Activated CD8-positive, alpha-beta T cell treated with anti-CD3 and anti-CD28 coated beads for 36 hours (primary cell): ENCODE measurements at regions of chr19 and their contacts with region 1.

Region 1: DNA sequence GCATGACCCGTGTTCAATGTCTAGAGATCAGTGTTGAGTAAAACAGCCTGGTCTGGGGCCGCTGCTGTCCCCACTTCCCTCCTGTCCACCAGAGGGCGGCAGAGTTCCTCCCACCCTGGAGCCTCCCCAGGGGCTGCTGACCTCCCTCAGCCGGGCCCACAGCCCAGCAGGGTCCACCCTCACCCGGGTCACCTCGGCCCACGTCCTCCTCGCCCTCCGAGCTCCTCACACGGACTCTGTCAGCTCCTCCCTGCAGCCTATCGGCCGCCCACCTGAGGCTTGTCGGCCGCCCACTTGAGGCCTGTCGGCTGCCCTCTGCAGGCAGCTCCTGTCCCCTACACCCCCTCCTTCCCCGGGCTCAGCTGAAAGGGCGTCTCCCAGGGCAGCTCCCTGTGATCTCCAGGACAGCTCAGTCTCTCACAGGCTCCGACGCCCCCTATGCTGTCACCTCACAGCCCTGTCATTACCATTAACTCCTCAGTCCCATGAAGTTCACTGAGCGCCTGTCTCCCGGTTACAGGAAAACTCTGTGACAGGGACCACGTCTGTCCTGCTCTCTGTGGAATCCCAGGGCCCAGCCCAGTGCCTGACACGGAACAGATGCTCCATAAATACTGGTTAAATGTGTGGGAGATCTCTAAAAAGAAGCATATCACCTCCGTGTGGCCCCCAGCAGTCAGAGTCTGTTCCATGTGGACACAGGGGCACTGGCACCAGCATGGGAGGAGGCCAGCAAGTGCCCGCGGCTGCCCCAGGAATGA is 1.5 kb upstream of the CEACAM5 start:
- DNase-seq: peak; percentile 80
- ATAC-seq: peak; percentile 97
- H3K4me3 Mint-ChIP-seq: peak overlapping the region; percentile 39
- H3K27ac Mint-ChIP-seq: no peak overlapping the region
- H3K4me1 Mint-ChIP-seq: no peaks in the 10 kb centered on the region
- H3K27me3 Mint-ChIP-seq: peaks cover 38% of the 10 kb centered on the region
- CTCF ChIP-seq: peak; percentile 100

Region 2: GRCh38 chr19:41641879-41642485 is 64.9 kb before region 1 on chr19:
- CTCF ChIA-PET with region 1: interaction called, 27 read pairs
- POLR2A ChIA-PET with region 1: no interaction called
- intact Hi-C with region 1: no loop called
- DNase-seq: peak; percentile 80
- ATAC-seq: peak; percentile 88
- H3K4me3 Mint-ChIP-seq: no peak overlapping the region
- H3K27ac Mint-ChIP-seq: no peak overlapping the region
- H3K4me1 Mint-ChIP-seq: no peaks in the 10 kb centered on the region
- H3K27me3 Mint-ChIP-seq: peaks cover 10% of the 10 kb centered on the region
- CTCF ChIP-seq: peak; percentile 94

Region 3: DNA sequence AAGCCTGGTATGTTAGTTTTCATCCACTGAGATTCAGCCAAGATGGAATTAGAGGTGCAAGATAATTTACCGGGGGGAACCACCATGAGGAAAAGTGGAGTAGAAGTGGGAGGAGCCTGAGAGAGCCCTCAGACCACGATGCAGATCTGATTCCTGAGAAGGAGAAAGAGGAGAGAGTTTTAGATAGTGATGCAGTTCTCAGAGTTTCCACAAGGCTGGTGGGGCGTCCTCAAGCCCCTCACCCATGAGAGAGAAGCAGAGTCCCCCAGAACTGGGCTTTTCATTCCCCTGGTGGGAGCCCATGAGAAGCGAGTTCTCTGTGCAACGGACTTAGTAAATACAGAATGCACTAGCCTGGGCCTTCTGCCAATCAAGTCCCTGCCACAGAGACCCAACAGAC is 19.6 kb after region 1 on chr19:
- CTCF ChIA-PET with region 1: interaction called, 17 read pairs
- POLR2A ChIA-PET with region 1: interaction called, 3 read pairs
- intact Hi-C with region 1: no loop called
- DNase-seq: no peak
- ATAC-seq: no peak
- H3K4me3 Mint-ChIP-seq: no peak overlapping the region
- H3K27ac Mint-ChIP-seq: no peak overlapping the region
- H3K4me1 Mint-ChIP-seq: no peaks in the 10 kb centered on the region
- H3K27me3 Mint-ChIP-seq: peaks cover 37% of the 10 kb centered on the region
- CTCF ChIP-seq: no peak

Region 4: DNA sequence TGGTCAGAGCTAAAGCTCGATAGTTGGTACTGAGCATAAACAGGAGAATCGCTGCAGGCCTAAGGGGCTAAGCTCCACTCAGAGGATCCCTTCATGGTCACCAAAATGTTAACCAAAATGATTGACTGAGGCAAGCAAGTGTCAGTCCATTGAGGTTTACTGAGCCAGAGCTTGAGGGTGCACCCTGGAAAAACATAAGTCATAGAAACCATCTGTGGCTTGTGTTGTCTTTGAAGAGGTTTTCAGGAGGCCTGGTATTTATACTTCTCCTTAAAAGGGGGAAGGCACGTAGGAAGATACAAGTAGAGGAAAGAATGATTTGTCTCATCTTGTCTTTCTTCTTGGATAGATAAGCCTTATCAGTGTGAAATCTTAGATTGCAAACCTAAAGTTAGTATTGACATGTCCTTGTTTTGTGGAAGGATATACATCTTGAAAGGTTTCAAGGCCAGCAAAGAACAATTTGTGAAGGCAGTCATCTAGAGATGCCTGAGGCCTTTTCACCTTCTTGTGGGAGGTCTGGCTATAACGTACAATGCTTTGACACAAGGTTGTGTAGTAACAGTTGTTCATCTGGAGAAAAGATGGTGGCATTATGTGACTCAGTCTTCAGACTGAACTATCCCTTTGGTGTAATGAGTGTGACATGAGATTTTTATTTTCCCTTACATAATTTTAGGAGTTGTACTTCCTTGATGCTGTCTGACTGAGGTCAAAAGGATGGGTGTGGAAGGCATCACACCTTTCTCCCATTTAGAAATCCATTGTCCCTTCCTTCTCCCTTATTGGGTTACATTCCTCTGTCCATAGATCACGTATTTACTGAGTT is 33.7 kb after region 1 on chr19:
- CTCF ChIA-PET with region 1: interaction called, 50 read pairs
- POLR2A ChIA-PET with region 1: interaction called, 3 read pairs
- intact Hi-C with region 1: no loop called
- DNase-seq: peak; percentile 50
- ATAC-seq: peak; percentile 83
- H3K4me3 Mint-ChIP-seq: no peak overlapping the region
- H3K27ac Mint-ChIP-seq: peak overlapping the region; percentile 65
- H3K4me1 Mint-ChIP-seq: peaks cover 24% of the 10 kb centered on the region
- H3K27me3 Mint-ChIP-seq: peaks cover 38% of the 10 kb centered on the region
- CTCF ChIP-seq: no peak

Region 5: DNA sequence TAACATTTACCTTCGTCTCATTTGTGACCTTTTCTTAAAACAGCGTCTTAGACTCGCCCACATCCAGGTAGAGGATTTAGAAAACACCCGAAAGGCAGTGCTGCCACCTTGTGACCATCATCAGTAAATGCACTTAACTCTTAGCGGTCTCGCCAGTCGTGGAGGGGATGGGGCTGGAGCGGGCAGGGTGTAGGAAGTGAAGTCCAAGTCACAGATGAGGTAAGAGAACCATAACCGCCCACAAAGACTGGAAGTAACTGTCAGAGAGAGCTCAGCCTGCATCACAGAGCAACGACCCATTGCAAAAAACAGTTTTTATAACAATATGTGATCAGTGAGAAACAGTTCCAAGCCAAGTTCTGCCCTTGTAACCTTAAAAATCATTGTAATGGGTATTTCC is 78.7 kb after region 1 on chr19:
- CTCF ChIA-PET with region 1: interaction called, 18 read pairs
- POLR2A ChIA-PET with region 1: no interaction called
- intact Hi-C with region 1: no loop called
- DNase-seq: peak; percentile 88
- ATAC-seq: peak; percentile 98
- H3K4me3 Mint-ChIP-seq: no peak overlapping the region
- H3K27ac Mint-ChIP-seq: no peak overlapping the region
- H3K4me1 Mint-ChIP-seq: peaks cover 14% of the 10 kb centered on the region
- H3K27me3 Mint-ChIP-seq: peaks cover 50% of the 10 kb centered on the region
- CTCF ChIP-seq: peak; percentile 94